ENCODE measurements at regions of chr6 and their contacts with region 1.

Region 1: DNA sequence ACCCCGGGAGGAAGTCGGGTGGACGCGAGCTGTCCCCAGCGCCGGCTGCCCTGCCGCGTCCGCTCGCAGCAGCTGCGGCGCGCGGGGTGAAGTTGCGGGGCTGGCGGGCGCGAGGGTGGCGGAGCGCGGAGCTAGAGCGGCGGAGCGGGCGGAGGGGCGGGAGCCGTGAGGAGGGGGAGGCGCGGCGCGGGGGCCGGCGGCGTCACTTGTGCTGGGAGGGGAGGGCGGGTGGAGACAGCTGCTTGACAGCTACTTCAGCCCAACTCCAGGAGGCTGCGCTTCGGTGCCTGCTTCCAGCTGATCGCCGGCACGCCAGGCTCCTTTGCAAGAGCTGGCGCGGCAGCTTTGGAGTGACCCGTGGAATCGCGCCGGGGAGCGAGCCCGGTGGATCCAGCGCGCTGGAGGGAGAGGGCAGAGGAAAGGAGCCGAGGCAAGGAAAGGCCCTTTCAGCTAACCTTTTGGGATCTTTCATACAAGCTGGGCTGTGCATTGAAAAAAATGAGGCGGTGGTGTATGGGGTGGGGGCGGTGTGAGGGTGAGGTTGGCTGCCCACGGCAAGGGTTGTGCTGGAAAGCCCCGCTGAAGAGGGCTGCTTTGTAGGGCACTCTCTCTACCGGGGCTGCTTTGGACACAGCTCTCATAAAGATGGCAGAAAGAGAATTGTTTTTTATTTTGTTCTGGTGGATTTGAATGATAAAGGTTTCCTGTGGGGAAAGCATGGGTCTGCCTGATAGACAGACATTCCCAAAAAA is 24.6 kb downstream of the RIPOR2 start:
- DNase-seq: peak; percentile 29
- H3K4me3 Mint-ChIP-seq: peak overlapping the region; percentile 89
- H3K27ac Mint-ChIP-seq: peak overlapping the region; percentile 94
- H3K4me1 Mint-ChIP-seq: peaks cover 91% of the 10 kb centered on the region
- H3K27me3 Mint-ChIP-seq: no peaks in the 10 kb centered on the region

Region 2: DNA sequence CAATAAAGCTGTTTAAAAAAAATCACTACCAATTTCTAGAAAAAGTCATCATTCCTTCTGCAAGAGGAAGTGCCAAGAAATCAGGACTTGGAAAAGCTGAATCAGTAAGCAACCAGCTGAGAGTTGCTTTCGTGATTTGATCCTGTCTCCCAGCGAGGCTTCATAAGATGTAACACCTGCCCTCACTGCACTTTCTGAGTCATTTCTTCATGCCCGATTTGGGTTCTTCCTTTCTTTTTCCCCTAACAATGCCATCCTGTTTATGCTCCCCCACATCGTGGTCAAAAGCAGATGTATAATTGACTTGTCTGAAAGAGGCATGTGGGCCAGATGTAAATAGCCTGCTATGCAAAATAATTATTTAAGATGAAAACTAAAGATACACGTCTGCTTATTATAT is 27.5 kb before region 1 on chr6:
- intact Hi-C with region 1: loop called (anchors 1 kb)
- DNase-seq: no peak
- H3K4me3 Mint-ChIP-seq: peak overlapping the region; percentile 66
- H3K27ac Mint-ChIP-seq: peak overlapping the region; percentile 91
- H3K4me1 Mint-ChIP-seq: peaks cover 79% of the 10 kb centered on the region
- H3K27me3 Mint-ChIP-seq: no peaks in the 10 kb centered on the region

Region 3: DNA sequence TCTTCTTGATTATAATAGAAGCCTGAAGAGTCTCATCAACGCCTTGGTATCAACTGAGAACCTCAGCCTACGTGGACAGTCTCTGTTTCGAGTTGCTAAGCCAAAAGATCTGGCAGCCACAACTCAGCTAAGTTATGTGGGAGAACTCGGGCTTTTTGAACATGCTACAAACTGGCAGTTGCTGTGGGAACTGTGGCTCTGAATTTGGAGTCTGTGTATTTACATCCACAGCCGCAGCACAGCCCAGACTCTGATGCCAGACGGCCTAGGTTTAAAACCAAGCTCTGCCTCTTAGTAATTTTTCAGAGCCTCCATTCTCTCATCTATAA is 11.2 kb before region 1 on chr6:
- intact Hi-C with region 1: loop called (anchors 1 kb)
- DNase-seq: no peak
- H3K4me3 Mint-ChIP-seq: peak overlapping the region; percentile 74
- H3K27ac Mint-ChIP-seq: peak overlapping the region; percentile 77
- H3K4me1 Mint-ChIP-seq: peaks cover 48% of the 10 kb centered on the region
- H3K27me3 Mint-ChIP-seq: no peaks in the 10 kb centered on the region

Region 4: DNA sequence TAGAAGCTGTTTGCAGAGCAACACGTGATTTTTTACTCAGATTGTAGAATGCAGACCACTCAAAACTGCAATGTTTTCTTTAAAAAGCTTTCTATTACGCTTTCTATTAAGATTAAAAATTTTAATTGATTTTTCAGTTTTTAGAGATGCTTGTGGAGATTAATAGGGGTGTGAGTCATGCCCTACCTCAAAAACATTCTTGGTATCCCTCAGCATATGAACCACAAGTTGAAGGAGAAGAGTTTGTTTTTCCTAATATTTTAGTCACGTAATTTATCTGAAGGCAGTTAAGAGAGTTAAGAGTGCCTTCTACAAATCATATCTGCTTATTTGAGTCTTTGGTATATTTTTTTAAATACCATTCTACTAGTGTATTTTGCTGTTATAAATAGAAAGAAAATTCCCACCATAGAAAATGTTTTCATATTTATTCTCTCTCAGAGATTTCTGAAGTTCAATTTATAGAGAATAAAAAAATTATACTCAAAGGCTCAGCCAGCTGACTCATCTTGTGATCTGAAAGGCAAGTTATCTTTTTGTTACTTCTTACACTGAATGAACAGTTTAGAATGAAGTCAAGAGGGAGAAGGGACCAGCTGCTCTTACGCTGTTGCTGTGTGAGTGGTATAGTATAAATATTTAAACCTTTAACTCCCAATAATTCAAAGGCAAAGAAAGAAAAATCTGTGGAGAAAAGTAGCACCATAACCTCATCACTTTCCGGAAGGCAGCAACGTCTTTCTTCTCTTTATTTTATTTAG is 17.0 kb after region 1 on chr6:
- intact Hi-C with region 1: loop called (anchors 1 kb)
- DNase-seq: no peak
- H3K4me3 Mint-ChIP-seq: peak overlapping the region; percentile 92
- H3K27ac Mint-ChIP-seq: peak overlapping the region; percentile 97
- H3K4me1 Mint-ChIP-seq: peaks cover 90% of the 10 kb centered on the region
- H3K27me3 Mint-ChIP-seq: no peaks in the 10 kb centered on the region

Region 5: DNA sequence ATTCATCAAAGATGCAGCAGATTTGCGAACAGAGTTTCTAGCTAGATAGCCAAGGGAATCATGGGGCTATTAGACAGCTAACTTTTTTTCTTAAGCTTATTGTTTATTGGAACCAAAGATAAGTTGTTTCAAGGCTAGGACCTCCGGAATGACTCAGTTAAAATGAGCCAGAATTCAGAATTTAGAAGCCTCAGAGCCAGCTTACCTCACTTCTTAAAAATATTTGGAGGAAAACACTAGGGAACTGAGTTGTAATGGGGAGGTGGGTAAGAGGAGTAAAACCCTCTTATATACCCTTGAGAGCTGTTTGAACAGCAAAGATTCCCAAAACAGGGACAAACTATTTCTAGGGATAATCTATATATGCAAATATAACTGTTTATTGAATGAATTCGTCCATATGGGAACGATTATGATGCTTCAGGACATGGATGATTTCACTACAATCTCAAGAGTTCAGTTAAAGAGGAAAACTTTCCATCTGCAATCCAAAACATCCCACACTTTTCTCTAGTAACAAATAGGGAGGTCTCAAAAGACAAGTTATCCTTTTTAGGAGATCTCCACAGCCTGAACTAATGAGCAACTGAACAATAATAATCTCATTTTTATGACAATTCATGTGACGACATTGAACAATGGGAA is 355.4 kb after region 1 on chr6:
- intact Hi-C with region 1: no loop called
- DNase-seq: no peak
- H3K4me3 Mint-ChIP-seq: no peak overlapping the region
- H3K27ac Mint-ChIP-seq: no peak overlapping the region
- H3K4me1 Mint-ChIP-seq: peaks cover 7% of the 10 kb centered on the region
- H3K27me3 Mint-ChIP-seq: peaks cover 37% of the 10 kb centered on the region